Activated CD4-positive, alpha-beta memory T cell treated with anti-CD3 and anti-CD28 coated beads for 36 hours (primary cell): ENCODE measurements at regions of chr19 and their contacts with region 1.

Region 1: DNA sequence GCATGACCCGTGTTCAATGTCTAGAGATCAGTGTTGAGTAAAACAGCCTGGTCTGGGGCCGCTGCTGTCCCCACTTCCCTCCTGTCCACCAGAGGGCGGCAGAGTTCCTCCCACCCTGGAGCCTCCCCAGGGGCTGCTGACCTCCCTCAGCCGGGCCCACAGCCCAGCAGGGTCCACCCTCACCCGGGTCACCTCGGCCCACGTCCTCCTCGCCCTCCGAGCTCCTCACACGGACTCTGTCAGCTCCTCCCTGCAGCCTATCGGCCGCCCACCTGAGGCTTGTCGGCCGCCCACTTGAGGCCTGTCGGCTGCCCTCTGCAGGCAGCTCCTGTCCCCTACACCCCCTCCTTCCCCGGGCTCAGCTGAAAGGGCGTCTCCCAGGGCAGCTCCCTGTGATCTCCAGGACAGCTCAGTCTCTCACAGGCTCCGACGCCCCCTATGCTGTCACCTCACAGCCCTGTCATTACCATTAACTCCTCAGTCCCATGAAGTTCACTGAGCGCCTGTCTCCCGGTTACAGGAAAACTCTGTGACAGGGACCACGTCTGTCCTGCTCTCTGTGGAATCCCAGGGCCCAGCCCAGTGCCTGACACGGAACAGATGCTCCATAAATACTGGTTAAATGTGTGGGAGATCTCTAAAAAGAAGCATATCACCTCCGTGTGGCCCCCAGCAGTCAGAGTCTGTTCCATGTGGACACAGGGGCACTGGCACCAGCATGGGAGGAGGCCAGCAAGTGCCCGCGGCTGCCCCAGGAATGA is 1.5 kb upstream of the CEACAM5 start:
- DNase-seq: peak; percentile 76
- H3K4me3 Mint-ChIP-seq: peak overlapping the region; percentile 40
- H3K27ac Mint-ChIP-seq: no peak overlapping the region
- H3K4me1 Mint-ChIP-seq: peaks cover 3% of the 10 kb centered on the region
- H3K27me3 Mint-ChIP-seq: peaks cover 37% of the 10 kb centered on the region

Region 2: GRCh38 chr19:41564515-41565378 is 142.2 kb before region 1 on chr19:
- CTCF ChIA-PET with region 1: no interaction called
- POLR2A ChIA-PET with region 1: no interaction called
- intact Hi-C with region 1: no loop called
- DNase-seq: no peak
- H3K4me3 Mint-ChIP-seq: peak overlapping the region; percentile 62
- H3K27ac Mint-ChIP-seq: no peak overlapping the region
- H3K4me1 Mint-ChIP-seq: peaks cover 69% of the 10 kb centered on the region
- H3K27me3 Mint-ChIP-seq: no peaks in the 10 kb centered on the region

Region 3: DNA sequence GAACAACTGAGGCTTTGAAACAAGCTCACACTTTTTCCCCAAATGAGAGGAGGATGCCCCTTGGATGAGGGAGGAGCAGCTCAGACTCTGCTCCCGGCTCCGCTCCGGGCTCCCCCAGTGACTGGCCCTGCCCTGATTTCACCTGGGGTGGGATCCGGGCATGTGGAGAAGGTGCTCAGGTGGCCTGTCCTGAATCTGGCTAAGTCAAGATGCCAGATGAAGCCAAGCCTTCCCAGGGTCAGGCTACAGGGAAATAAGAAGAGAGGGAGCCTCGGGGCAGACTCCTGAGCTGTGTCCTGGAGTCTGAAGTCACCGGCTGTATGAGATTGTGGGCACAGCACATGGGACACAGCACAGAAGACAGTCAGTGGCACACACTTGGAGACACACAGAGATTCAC is 11.8 kb after region 1 on chr19:
- CTCF ChIA-PET with region 1: interaction called, 25 read pairs
- POLR2A ChIA-PET with region 1: no interaction called
- intact Hi-C with region 1: no loop called
- DNase-seq: no peak
- H3K4me3 Mint-ChIP-seq: no peak overlapping the region
- H3K27ac Mint-ChIP-seq: no peak overlapping the region
- H3K4me1 Mint-ChIP-seq: no peaks in the 10 kb centered on the region
- H3K27me3 Mint-ChIP-seq: peaks cover 46% of the 10 kb centered on the region

Region 4: GRCh38 chr19:41734617-41735016 is 27.7 kb after region 1 on chr19:
- CTCF ChIA-PET with region 1: interaction called, 30 read pairs
- POLR2A ChIA-PET with region 1: no interaction called
- intact Hi-C with region 1: no loop called
- DNase-seq: no peak
- H3K4me3 Mint-ChIP-seq: no peak overlapping the region
- H3K27ac Mint-ChIP-seq: no peak overlapping the region
- H3K4me1 Mint-ChIP-seq: no peaks in the 10 kb centered on the region
- H3K27me3 Mint-ChIP-seq: peaks cover 39% of the 10 kb centered on the region

Region 5: DNA sequence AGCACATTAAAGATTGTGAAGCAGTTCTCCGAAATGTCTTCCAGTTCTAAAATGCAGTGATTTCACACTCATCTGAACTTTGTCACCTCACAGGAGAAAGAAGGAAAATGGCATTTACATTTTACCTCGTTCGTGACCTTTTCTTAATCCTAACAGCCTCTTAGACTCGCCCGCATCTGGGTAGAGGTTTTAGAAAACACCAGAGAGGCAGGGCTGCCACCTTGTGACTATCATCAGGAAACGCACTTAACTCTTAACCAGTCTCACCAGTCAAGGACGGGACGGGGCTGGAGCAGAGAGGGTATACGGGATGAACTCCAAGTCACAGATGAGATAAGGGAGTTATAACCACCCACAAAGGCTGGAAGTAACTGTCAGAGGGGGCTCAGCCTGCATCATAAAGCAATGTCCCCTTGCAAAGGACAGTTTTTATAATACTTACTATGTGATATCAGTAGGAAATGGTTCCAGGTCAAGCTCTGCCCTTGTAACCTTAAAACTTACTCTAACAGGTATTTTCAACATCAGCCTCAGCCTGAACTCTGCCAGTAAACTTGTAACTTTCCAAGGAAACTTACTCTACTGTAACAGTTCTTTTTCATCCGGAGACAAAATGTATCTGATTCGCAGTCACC is 39.8 kb after region 1 on chr19:
- CTCF ChIA-PET with region 1: interaction called, 72 read pairs
- POLR2A ChIA-PET with region 1: no interaction called
- intact Hi-C with region 1: loop called (anchors 1 kb)
- DNase-seq: peak; percentile 66
- H3K4me3 Mint-ChIP-seq: no peak overlapping the region
- H3K27ac Mint-ChIP-seq: no peak overlapping the region
- H3K4me1 Mint-ChIP-seq: no peaks in the 10 kb centered on the region
- H3K27me3 Mint-ChIP-seq: peaks cover 52% of the 10 kb centered on the region